T-cell (primary cell): ENCODE measurements at regions of chr6 and their contacts with region 1.

Region 1: DNA sequence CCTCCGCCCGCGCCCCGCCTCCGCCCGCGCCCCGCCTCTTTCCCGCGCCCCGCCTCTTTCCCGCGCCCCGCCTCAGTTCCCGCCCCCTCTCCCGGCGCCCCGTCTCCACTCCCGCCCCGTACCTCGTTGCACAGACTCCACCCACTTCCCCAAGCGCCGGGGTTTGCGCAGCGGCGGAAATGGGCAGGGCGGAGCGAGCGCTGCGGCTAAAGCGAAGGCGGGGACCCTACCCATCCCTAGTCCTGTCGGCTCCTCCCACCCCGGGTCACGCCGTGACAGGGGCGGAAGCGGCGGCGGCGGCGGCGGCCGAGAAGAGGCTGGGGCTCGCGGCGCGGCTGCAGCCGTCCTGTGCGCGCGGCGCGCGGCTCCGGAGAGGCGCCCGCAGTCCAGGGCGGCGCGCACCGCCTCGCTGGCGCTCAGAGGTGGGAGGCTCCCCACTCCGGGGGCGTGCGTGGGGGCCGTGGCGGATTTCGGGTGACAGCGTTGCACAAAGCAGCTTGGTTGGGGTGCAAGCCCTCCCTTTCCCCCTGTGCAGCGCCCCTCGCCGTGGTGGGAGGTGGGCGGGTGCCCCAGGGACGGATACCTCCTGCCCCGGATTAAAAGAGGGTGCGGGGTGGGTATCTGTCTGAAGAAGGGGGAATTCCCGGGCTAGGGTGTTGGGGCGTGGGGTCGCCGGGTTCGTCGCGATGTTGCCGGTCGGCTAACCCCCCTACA is at the start of gene KDM1B:
- DNase-seq: peak; percentile 97 to 100 (median 98)
- ATAC-seq: peak; percentile 91 to 96 (median 92)
- H3K4me3 ChIP-seq: peak within 1 kb of the TSS; percentile 98
- H3K4me3 Mint-ChIP-seq: peak within 1 kb of the TSS; percentile 90 to 97 (median 96)
- H3K27ac ChIP-seq: peak within 1 kb of the TSS; percentile 90
- H3K27ac Mint-ChIP-seq: peak within 1 kb of the TSS; percentile 93 to 97
- H3K4me1 ChIP-seq: peaks cover 18 to 19% of the 10 kb centered on the region in 2 experiments
- H3K4me1 Mint-ChIP-seq: peaks cover 29 to 55% (median 38%) of the 10 kb centered on the region in 3 donors
- H3K27me3 ChIP-seq: no peaks in the 10 kb centered on the region
- H3K27me3 Mint-ChIP-seq: no peaks in the 10 kb centered on the region
- total RNA-seq, gene KDM1B: 9.0 to 10.7 (median 10.4) TPM

Region 2: DNA sequence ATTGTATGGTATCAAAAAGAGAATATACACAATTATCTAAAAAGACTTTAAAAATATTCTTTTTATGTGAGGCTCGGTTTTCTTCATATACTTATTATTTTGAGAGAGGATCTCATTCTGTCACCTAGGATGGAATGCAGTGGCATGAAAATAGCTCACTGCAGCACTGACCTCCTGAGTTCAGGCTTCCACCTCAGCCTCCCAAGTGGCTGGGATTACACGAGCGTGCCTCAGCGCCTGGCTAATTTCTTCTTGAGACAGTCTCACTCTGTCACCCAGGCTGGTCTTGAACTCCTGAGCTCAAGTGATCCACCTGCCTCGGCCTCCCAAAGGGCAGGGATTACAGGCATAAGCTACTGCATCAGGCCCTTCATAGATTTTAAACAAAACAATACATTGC is 98.3 kb after region 1 on chr6:
- CTCF ChIA-PET with region 1: interaction called in 1 of 2 experiments, 5 read pairs
- POLR2A ChIA-PET with region 1: interaction called, 4 to 10 read pairs
- DNase-seq: no peak
- ATAC-seq: no peak
- H3K4me3 ChIP-seq: no peak overlapping the region
- H3K4me3 Mint-ChIP-seq: no peak overlapping the region
- H3K27ac ChIP-seq: no peak overlapping the region
- H3K27ac Mint-ChIP-seq: no peak overlapping the region
- H3K4me1 ChIP-seq: no peaks in the 10 kb centered on the region
- H3K4me1 Mint-ChIP-seq: peaks cover 12 to 30% (median 19%) of the 10 kb centered on the region in 3 donors
- H3K27me3 ChIP-seq: no peaks in the 10 kb centered on the region
- H3K27me3 Mint-ChIP-seq: no peaks in the 10 kb centered on the region